ENCODE measurements at regions of chr10 and their contacts with region 1.

Region 1: GRCh38 chr10:94027196-94027595 is 33.5 kb downstream of the PLCE1 start:
- DNase-seq: no peak
- ATAC-seq: no peak

Region 2: GRCh38 chr10:94012834-94013233 is 14.4 kb before region 1 on chr10:
- intact Hi-C with region 1: loop called in 1 of 2 experiments (anchors 1 kb)
- DNase-seq: no peak
- ATAC-seq: no peak

Measured in left cardiac atrium (tissue), 4 donors.